Activated CD4-positive, alpha-beta T cell treated with anti-CD3 and anti-CD28 coated beads for 36 hours (primary cell): ENCODE measurements at regions of chr12 and their contacts with region 1.

Region 1: DNA sequence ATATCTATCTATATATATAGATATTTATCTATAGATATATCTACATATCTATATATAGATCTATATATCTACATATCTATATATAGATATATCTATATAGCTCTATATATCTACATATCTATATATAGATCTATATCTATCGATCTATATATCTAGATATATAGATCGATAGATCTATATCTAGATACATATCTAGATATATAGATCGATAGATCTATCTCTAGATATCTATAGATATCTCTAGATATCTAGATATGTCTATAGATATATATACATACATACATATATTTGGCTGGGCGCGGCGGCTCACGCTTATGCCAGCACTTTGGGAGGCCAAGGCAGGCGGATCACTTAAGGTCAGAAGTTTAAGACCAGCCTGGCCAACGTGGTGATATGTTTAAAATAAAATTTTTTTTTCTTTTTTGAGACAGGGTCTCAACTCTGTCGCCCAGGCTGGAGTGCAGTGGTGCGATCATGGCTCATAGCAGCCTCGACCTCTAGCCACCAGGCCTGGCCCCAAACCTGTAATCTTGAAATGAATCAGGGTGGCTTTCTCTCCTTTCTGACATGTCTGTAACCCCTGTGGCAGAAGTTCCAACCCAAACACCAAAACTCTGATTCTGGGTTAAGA is 18.1 kb downstream of the ARPC3 start:
- DNase-seq: peak; percentile 54
- ATAC-seq: peak; percentile 45
- H3K4me3 Mint-ChIP-seq: peak overlapping the region; percentile 93
- H3K27ac Mint-ChIP-seq: no peak overlapping the region
- H3K4me1 Mint-ChIP-seq: peaks cover 11% of the 10 kb centered on the region
- H3K27me3 Mint-ChIP-seq: no peaks in the 10 kb centered on the region

Region 2: GRCh38 chr12:110124184-110124995 is 307.7 kb before region 1 on chr12 and contains the start of gene IFT81:
- CTCF ChIA-PET with region 1: interaction called, 5 read pairs
- POLR2A ChIA-PET with region 1: interaction called, 5 read pairs
- intact Hi-C with region 1: loop called in 1 of 2 experiments (anchors 1 kb)
- DNase-seq: peak; percentile 98
- ATAC-seq: peak; percentile 91
- H3K4me3 Mint-ChIP-seq: peak within 1 kb of the TSS; percentile 83
- H3K27ac Mint-ChIP-seq: peak within 1 kb of the TSS; percentile 81
- H3K4me1 Mint-ChIP-seq: peaks cover 7% of the 10 kb centered on the region
- H3K27me3 Mint-ChIP-seq: peaks cover 4% of the 10 kb centered on the region
- total RNA-seq, gene IFT81: 3.5 TPM

Region 3: DNA sequence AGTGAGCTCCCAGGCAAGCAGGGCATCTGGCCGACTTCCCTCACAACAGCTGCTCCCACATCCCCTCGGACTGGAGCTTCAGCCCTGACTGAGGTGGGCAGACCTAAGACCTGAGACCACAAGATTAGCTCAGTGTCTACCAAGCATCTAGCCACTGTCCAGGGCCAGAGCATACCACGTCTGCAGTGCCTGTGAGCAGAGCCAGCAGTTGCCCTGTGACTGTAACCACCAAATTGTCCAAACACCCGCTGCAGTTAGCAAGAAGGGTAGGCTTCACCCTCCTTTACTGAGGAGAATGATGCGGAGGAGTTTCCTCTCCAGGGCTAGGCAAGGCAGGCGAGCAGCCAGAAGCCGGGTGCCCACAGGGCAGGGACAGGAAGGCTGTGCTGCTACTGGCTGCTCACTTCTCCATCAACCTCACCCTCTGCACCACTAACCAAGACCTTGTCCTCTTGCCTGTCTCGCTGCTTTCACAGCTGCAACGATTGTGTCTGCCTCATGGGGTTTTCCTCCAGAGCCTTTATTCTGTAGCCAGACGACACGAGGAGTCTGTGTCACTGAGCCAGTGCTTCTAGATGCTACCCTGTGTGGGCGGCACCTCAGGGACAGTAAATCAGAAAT is 82.4 kb before region 1 on chr12:
- CTCF ChIA-PET with region 1: interaction called, 23 read pairs
- POLR2A ChIA-PET with region 1: no interaction called
- intact Hi-C with region 1: no loop called
- DNase-seq: peak; percentile 77
- ATAC-seq: peak; percentile 87
- H3K4me3 Mint-ChIP-seq: peak overlapping the region; percentile 15
- H3K27ac Mint-ChIP-seq: peak overlapping the region; percentile 81
- H3K4me1 Mint-ChIP-seq: peaks cover 42% of the 10 kb centered on the region
- H3K27me3 Mint-ChIP-seq: no peaks in the 10 kb centered on the region

Region 4: DNA sequence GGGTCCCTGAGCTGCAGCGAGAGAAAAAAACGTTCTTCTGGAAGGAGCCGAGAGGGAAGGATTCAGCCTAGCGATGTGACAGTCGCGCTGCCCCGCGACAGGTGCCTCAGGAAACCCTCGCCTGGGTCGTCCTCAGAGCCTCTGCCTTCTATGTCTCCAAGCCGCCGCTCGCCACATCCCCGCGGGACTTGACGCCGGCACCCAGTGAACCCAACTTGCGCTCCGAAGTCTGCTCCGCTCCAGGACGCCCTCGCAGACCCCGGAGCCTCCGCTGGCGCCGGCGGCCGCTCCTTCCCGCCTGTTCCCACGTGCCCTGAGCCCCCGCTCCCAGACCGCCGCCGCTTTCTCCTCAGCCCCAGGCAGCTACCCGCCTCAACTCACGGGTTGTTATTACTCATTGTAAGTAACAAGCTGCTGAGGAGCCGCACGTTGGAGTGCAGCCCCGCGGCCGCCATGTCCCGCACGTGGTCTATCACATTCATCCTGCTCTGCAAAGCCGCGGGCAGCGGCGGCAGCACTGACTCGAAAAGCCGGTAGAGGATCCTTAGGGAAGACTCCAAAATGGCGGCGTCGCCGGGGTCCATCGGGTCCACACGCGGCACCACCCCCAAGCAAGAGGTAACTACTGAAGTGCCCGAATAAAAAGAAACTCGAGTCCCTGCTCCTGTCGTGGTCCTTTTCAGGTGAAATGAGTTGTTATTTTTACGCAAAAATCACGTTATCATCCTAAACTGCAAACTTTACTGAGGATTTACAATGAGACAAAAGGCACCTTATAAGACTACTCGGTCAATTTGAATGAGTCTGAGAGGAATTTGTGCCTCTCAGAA is 28.7 kb before region 1 on chr12 and contains the start of gene ANAPC7:
- CTCF ChIA-PET with region 1: interaction called, 10 read pairs
- POLR2A ChIA-PET with region 1: no interaction called
- intact Hi-C with region 1: loop called (anchors 1 kb)
- DNase-seq: peak; percentile 93
- ATAC-seq: peak; percentile 94
- H3K4me3 Mint-ChIP-seq: peak within 1 kb of the TSS; percentile 88
- H3K27ac Mint-ChIP-seq: peak within 1 kb of the TSS; percentile 99
- H3K4me1 Mint-ChIP-seq: peaks cover 21% of the 10 kb centered on the region
- H3K27me3 Mint-ChIP-seq: no peaks in the 10 kb centered on the region
- total RNA-seq, gene ANAPC7: 52.6 to 63.6 TPM

Region 5: DNA sequence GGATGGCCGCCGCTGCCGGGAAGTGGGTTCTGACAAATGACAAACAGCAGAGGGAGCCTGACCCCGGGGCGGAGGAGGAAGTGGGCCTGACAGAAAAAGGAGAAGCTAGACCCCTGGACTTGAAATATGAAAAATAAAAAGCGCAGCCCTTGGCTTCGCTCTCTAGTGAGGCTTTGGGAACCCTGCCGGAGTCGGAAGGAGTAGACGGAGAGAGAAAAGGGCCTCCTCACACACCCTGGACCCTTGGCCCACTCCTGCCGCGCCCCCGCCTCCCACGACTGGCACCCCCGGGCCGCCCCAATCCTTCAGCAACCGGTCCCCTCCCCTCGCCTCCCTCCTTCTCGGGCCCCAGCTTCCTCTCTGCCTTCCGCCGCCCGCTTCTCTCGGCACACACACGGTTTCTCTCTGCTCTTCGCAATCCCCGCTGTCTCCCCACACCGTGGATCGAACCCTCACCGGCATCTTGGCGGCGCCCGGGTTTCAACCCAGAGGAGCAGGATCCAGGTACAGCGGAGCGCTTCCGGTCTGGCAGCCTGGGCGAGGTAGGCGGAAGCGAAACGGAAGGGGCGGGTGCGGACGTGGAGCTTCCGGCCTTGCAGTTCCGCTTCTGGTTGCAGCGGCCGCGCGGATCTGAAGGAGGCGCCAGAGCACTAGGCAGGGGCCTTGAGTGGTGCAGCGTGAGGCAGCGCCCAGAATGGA is 17.9 kb after region 1 on chr12 and contains the start of gene ARPC3:
- CTCF ChIA-PET with region 1: interaction called, 26 read pairs
- POLR2A ChIA-PET with region 1: interaction called, 17 read pairs
- intact Hi-C with region 1: loop called in 1 of 2 experiments (anchors 2 kb)
- DNase-seq: peak; percentile 98
- ATAC-seq: peak; percentile 99
- H3K4me3 Mint-ChIP-seq: peak within 1 kb of the TSS; percentile 97
- H3K27ac Mint-ChIP-seq: peak within 1 kb of the TSS; percentile 100
- H3K4me1 Mint-ChIP-seq: peaks cover 38% of the 10 kb centered on the region
- H3K27me3 Mint-ChIP-seq: no peaks in the 10 kb centered on the region
- total RNA-seq, gene ARPC3: 244 to 422 TPM

Region 6: DNA sequence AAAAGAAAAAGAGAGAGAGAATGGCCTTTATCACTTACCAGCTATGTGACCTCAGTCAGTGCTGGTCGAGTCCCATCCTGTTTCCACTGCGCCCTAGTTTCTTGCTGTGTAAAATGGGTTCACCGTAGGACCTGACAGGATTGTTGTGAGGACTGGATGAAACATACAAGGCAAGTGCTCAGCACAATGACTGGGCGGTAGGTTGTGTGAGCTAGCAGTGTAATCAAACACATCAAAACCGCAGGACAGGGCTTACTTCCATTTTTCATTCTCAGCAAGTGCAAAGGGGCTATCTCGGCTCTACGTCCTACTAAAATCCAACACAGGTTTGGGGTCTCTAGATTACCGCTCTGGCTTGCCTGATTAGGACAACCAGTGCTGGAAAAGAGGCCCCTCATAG is 1203.5 kb after region 1 on chr12:
- CTCF ChIA-PET with region 1: no interaction called
- POLR2A ChIA-PET with region 1: no interaction called
- intact Hi-C with region 1: no loop called
- DNase-seq: no peak
- ATAC-seq: no peak
- H3K4me3 Mint-ChIP-seq: no peak overlapping the region
- H3K27ac Mint-ChIP-seq: no peak overlapping the region
- H3K4me1 Mint-ChIP-seq: no peaks in the 10 kb centered on the region
- H3K27me3 Mint-ChIP-seq: no peaks in the 10 kb centered on the region